B cell (primary cell): ENCODE measurements at regions of chr2 and their contacts with region 1.

Region 1: GRCh38 chr2:64644177-64645004 is 9.3 kb downstream of the SERTAD2 start:
- DNase-seq: peak; percentile 74
- ATAC-seq: peak; percentile 37
- H3K4me3 ChIP-seq: peak overlapping the region; percentile 21 to 50 (median 29)
- H3K4me3 Mint-ChIP-seq: peak overlapping the region; percentile 89
- H3K27ac ChIP-seq: peak overlapping the region; percentile 66 to 81
- H3K27ac Mint-ChIP-seq: peak overlapping the region; percentile 97
- H3K4me1 ChIP-seq: peaks cover 78 to 88% of the 10 kb centered on the region in 2 donors
- H3K4me1 Mint-ChIP-seq: peaks cover 89% of the 10 kb centered on the region
- H3K27me3 ChIP-seq: no peaks in the 10 kb centered on the region
- H3K27me3 Mint-ChIP-seq: no peaks in the 10 kb centered on the region
- CTCF ChIP-seq: no peak

Region 2: DNA sequence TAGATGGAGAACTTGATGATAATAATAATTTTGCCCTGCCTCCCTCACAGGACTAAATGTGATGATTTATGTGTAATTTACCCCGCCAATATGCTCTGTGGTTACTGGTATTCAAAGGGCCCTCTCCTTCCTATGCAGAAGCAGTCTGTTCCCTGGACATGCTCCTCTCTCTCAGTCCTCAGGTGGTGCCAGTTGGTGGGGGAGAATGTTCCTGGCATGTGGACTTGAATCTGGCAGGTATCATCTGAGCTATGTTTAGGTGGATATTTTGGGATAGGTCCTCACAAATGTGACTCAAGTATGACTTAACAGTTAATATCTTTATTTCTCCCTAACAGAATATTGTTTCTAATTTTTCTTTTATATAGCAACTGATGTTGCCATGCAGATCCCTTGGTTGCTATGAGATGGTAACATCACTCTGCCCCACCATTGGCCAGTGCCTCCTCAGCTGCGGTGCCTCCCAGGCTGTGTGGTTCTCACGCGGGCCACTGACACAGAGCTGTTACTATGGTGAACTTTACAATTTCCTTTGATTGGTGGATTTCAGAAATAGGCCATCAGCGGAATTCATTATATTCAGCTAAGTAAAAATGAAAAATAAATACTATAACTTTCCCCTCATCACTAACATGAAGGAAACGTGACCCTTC is 393.5 kb before region 1 on chr2:
- CTCF ChIA-PET with region 1: no interaction called
- POLR2A ChIA-PET with region 1: no interaction called
- intact Hi-C with region 1: no loop called
- DNase-seq: no peak
- ATAC-seq: no peak
- H3K4me3 ChIP-seq: no peak overlapping the region
- H3K4me3 Mint-ChIP-seq: no peak overlapping the region
- H3K27ac ChIP-seq: no peak overlapping the region
- H3K27ac Mint-ChIP-seq: no peak overlapping the region
- H3K4me1 ChIP-seq: no peaks in the 10 kb centered on the region
- H3K4me1 Mint-ChIP-seq: no peaks in the 10 kb centered on the region
- H3K27me3 ChIP-seq: no peaks in the 10 kb centered on the region
- H3K27me3 Mint-ChIP-seq: no peaks in the 10 kb centered on the region
- CTCF ChIP-seq: no peak

Region 3: DNA sequence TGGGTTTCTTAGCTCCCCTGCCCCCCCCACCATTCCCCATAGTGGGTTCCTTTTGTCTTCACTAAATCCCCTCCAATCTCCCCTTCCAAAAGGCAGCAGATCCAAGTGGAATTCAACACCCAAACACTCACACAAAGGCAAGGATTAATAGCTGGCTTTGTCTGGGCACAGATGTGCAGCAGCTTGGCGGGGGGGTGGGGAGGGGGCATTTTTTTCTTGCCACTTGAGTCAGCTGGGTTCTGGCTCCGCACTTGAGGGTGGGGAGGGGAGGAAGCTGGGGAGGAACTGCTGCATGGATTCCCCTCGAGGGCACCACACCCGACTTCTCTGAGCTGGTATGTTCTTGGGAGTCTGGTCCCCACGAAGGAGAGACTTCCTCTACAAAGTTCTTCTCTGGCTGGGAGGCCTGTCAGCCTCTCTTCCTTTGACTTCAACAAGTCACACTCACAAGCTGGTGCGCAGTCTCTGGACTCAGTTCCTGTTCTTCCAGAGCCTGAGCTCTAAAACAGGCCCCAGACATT is 26.7 kb before region 1 on chr2:
- CTCF ChIA-PET with region 1: interaction called, 43 read pairs
- POLR2A ChIA-PET with region 1: interaction called, 4 read pairs
- intact Hi-C with region 1: no loop called
- DNase-seq: no peak
- ATAC-seq: no peak
- H3K4me3 ChIP-seq: no peak overlapping the region
- H3K4me3 Mint-ChIP-seq: no peak overlapping the region
- H3K27ac ChIP-seq: no peak overlapping the region
- H3K27ac Mint-ChIP-seq: no peak overlapping the region
- H3K4me1 ChIP-seq: no peaks in the 10 kb centered on the region
- H3K4me1 Mint-ChIP-seq: peaks cover 2% of the 10 kb centered on the region
- H3K27me3 ChIP-seq: no peaks in the 10 kb centered on the region
- H3K27me3 Mint-ChIP-seq: no peaks in the 10 kb centered on the region
- CTCF ChIP-seq: no peak

Region 4: DNA sequence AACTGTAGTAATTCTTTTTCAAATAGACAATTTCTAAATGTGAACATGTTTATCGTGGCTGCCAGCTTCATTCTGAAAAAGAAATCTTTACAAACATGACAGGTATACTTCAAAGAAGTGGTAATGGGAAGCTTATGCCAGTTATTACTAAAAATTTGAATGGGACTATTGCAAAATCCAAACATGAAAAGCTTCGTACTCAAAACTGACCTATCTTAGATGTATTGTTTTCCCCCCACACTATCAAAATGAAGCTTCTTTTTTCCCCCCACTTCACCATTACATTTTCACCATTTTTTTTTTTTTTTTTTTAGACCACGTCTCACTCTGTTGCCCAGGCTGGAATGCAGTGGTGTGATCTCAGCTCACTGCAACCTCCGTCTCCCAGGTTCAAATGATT is 59.8 kb after region 1 on chr2:
- CTCF ChIA-PET with region 1: interaction called, 12 read pairs
- POLR2A ChIA-PET with region 1: no interaction called
- intact Hi-C with region 1: loop called (anchors 2 kb)
- DNase-seq: no peak
- ATAC-seq: no peak
- H3K4me3 ChIP-seq: no peak overlapping the region
- H3K4me3 Mint-ChIP-seq: no peak overlapping the region
- H3K27ac ChIP-seq: no peak overlapping the region
- H3K27ac Mint-ChIP-seq: no peak overlapping the region
- H3K4me1 ChIP-seq: peaks cover 8 to 12% of the 10 kb centered on the region in 2 donors
- H3K4me1 Mint-ChIP-seq: peaks cover 13% of the 10 kb centered on the region
- H3K27me3 ChIP-seq: no peaks in the 10 kb centered on the region
- H3K27me3 Mint-ChIP-seq: no peaks in the 10 kb centered on the region
- CTCF ChIP-seq: no peak

Region 5: DNA sequence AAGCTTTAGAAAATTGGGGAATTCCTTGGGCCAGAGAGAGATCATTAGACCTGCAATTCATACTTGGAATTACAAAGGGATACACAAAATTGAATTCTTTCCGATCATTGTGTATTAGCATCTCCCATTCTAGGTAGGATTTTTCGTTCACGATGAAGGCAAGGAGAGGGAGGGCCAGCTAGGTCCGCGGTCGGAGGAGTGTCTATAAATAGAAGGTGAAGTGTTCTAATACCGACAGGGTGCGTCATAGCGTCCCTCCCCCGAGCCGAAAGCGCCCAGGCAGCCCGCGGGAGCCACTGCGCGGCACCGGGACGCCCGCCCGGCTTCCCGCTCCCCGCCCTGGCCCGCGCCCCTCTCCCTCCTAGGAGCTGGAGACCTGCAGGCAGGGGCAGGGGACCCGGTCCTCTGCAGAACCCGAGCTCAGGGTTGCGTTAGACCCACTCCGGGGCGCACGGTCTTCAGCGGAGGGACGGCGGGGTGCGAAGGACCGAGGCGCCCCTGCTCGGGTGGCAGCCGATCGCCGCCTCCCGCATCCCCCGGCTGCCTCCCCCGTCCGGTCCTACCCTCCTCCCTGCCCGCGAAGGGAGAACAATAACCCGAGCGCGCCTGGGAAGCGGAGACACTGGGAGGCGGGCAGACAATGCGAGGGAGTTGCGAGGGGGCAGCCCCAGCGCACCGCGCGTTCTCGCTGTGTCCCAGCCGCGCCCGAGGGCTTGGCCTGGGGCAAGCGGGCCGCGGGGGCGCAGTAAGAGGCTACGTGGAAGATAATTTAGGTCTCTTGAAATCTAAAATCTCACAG is 123.5 kb after region 1 on chr2:
- CTCF ChIA-PET with region 1: interaction called, 14 read pairs
- POLR2A ChIA-PET with region 1: interaction called, 5 read pairs
- intact Hi-C with region 1: no loop called
- DNase-seq: peak; percentile 88
- ATAC-seq: peak; percentile 79
- H3K4me3 ChIP-seq: peak overlapping the region; percentile 60 to 99 (median 87)
- H3K4me3 Mint-ChIP-seq: peak overlapping the region; percentile 94
- H3K27ac ChIP-seq: peak overlapping the region; percentile 82 to 95
- H3K27ac Mint-ChIP-seq: peak overlapping the region; percentile 97
- H3K4me1 ChIP-seq: peaks cover 13% of the 10 kb centered on the region in 2 donors
- H3K4me1 Mint-ChIP-seq: peaks cover 24% of the 10 kb centered on the region
- H3K27me3 ChIP-seq: no peaks in the 10 kb centered on the region
- H3K27me3 Mint-ChIP-seq: no peaks in the 10 kb centered on the region
- CTCF ChIP-seq: no peak

Region 6: GRCh38 chr2:64914735-64915509 is 270.5 kb after region 1 on chr2:
- CTCF ChIA-PET with region 1: interaction called, 4 read pairs
- POLR2A ChIA-PET with region 1: no interaction called
- intact Hi-C with region 1: loop called (anchors 5 kb)
- DNase-seq: peak; percentile 80
- ATAC-seq: peak; percentile 79
- H3K4me3 ChIP-seq: no peak overlapping the region
- H3K4me3 Mint-ChIP-seq: peak overlapping the region; percentile 62
- H3K27ac ChIP-seq: peak overlapping the region in 1 of 2 donors; percentile 58
- H3K27ac Mint-ChIP-seq: peak overlapping the region; percentile 66
- H3K4me1 ChIP-seq: peaks cover 57 to 68% of the 10 kb centered on the region in 2 donors
- H3K4me1 Mint-ChIP-seq: peaks cover 59% of the 10 kb centered on the region
- H3K27me3 ChIP-seq: no peaks in the 10 kb centered on the region
- H3K27me3 Mint-ChIP-seq: no peaks in the 10 kb centered on the region
- CTCF ChIP-seq: no peak